ENCODE measurements at regions of chr1 and their contacts with region 1.

Region 1: DNA sequence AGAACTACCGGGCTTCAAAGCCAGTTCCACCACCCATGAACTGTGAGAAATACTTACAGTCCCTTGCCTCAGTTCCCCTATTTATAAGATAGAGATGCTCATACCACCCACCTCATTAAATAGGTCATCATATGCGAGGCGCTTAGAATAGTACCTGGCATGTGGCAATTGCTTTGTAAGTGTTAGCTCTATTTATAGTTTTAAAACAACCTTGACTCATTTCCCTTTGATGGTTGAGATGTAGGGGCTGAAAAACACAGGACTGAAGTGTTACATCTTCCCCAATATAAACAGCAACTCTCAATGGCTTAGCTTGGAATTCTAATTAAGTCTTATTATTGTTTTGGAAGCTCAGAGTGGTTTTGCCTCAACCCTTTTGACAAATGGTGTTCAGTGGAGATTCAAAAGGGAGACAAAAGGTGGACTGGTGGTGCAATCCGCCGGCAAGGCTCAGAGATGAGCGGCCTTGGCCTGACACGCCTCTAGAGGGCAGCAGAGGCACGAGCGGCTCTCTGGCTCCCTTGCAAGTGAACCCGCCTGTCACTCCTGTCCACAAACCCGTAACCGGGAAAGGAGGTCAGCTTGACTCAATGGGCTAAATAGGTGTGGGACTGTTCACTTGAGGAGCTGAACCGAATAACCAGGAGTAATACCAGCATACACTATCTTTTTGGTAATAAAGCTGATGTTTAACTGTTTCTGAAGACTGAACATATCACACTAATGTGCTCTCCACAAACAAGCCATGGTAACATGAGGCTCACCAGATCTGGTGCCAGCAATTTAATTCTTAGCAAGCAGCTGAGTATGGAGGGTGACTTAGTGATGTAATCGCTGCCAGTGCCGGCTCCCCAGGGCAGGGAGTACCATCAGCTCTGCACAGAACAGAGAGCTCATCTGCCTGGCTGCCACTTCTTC is 19.5 kb upstream of the SMYD2 start:
- DNase-seq: peak; percentile 65 to 74 (median 70)
- H3K4me3 ChIP-seq: peak overlapping the region in 2 of 7 experiments; percentile 16 to 30
- H3K27ac ChIP-seq: no peak overlapping the region
- H3K4me1 ChIP-seq: peaks cover 0 to 4% (median 0%) of the 10 kb centered on the region in 4 experiments
- H3K27me3 ChIP-seq: peaks cover 0 to 29% (median 12%) of the 10 kb centered on the region in 5 experiments

Region 2: DNA sequence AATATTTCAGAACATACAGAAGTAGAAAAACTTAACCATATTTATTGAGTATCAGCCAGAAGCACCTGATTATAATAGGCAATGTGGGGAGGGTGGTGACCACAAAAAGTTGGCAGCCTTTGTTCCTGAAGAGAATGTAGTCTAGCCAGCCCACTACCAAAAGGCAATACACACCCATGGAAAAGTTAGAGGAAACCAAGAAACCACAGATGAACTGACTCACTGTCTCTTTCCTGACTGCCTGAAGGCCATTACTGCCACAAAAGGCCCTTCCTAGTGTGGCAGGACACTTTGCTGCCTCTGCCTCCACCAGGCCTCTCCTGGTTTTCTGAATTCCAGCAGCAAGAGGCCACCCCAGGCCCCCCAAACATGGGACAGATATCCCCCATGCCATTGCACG is 288.3 kb before region 1 on chr1:
- CTCF ChIA-PET with region 1: no interaction called
- POLR2A ChIA-PET with region 1: no interaction called
- DNase-seq: no peak
- H3K4me3 ChIP-seq: no peak overlapping the region
- H3K27ac ChIP-seq: no peak overlapping the region
- H3K4me1 ChIP-seq: no peaks in the 10 kb centered on the region
- H3K27me3 ChIP-seq: peaks cover 0 to 34% (median 12%) of the 10 kb centered on the region in 5 experiments

Region 3: DNA sequence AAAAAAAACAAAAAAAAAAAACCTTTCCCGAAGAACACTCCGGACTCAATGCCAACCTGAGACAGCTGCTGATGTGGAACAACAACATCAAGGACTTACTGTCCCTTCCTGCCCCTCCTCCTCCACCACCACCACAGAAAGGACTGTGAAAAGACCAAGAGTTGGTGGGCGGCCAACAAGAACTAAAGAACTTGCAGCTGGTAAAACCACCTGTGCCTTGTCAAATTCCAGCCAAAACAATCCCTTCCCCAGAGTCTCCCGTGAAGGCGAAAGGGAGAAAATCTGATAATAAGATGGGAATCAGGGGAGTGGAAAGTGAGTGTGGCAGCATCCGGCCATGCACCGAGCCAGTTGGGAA is 184.8 kb before region 1 on chr1:
- CTCF ChIA-PET with region 1: no interaction called
- POLR2A ChIA-PET with region 1: no interaction called
- DNase-seq: no peak
- H3K4me3 ChIP-seq: no peak overlapping the region
- H3K27ac ChIP-seq: no peak overlapping the region
- H3K4me1 ChIP-seq: no peaks in the 10 kb centered on the region
- H3K27me3 ChIP-seq: peaks cover 0 to 2% (median 0%) of the 10 kb centered on the region in 5 experiments

Region 4: DNA sequence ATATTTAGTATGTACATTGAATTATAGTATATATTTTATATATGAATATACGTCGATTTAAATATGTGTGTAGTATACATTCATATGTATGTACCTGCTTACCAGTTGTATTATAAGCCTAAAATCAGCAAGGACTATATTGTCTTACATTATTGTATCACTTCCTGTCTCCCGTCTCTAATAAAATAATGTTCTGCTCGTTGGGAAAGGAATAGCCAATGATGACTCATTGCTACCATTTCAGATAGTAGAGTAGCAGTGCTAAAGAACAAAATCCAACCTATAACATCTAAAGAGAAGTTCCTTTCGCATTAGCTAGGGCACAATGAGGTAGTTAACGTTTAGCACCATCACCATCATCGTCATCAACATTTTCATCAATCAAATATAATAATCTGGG is 20.4 kb before region 1 on chr1:
- CTCF ChIA-PET with region 1: interaction called, 11 read pairs
- POLR2A ChIA-PET with region 1: no interaction called
- DNase-seq: no peak
- H3K4me3 ChIP-seq: no peak overlapping the region
- H3K27ac ChIP-seq: no peak overlapping the region
- H3K4me1 ChIP-seq: peaks cover 0 to 5% (median 0%) of the 10 kb centered on the region in 4 experiments
- H3K27me3 ChIP-seq: no peaks in the 10 kb centered on the region

Region 5: GRCh38 chr1:214281720-214282629 is 20.5 kb after region 1 on chr1:
- CTCF ChIA-PET with region 1: interaction called, 30 read pairs
- POLR2A ChIA-PET with region 1: no interaction called
- DNase-seq: peak in 1 of 3 donors; percentile 10
- H3K4me3 ChIP-seq: peak overlapping the region; percentile 31 to 93 (median 83)
- H3K27ac ChIP-seq: no peak overlapping the region
- H3K4me1 ChIP-seq: peaks cover 3 to 26% (median 17%) of the 10 kb centered on the region in 4 experiments
- H3K27me3 ChIP-seq: no peaks in the 10 kb centered on the region

Region 6: GRCh38 chr1:214316593-214316992 is 55.1 kb after region 1 on chr1:
- CTCF ChIA-PET with region 1: interaction called, 15 read pairs
- POLR2A ChIA-PET with region 1: no interaction called
- DNase-seq: no peak
- H3K4me3 ChIP-seq: no peak overlapping the region
- H3K27ac ChIP-seq: no peak overlapping the region
- H3K4me1 ChIP-seq: peaks cover 0 to 4% (median 2%) of the 10 kb centered on the region in 4 experiments
- H3K27me3 ChIP-seq: no peaks in the 10 kb centered on the region

Measured in common myeloid progenitor, CD34-positive (primary cell).